Caco-2 (cell line): ENCODE measurements at regions of chr3 and their contacts with region 1.

Region 1: DNA sequence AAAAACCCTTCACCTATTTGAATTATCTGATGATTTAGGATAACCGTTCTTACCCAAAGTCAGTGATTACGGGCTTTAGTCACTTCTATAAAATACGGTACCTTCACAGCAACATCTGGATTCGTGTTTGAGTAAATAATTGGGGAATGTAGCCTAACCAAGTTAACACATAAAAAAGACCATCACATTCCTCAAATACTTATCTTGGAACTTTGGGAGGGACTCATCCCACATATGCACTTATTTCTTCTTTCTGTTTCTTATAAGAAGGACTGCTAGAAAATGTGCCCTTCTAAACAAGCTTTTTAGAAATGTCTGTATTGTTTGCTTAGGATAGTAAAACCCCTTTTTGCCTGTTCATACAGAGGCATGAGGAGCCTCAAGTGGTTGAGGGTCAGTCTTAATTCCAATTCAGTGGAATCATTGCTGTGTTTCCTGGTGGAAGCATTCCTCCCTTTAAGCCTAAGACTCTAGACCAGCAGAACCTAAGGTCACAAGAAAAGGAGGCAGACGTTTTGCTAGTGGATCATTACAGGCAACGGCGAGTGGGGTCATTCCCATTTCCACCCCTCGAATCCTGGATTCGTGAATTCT is 67.5 kb downstream of the TMEM44 start:
- DNase-seq: no peak
- H3K4me3 ChIP-seq: no peak overlapping the region
- H3K4me3 Mint-ChIP-seq: no peak overlapping the region
- H3K27ac Mint-ChIP-seq: no peak overlapping the region
- H3K4me1 ChIP-seq: peaks cover 44% of the 10 kb centered on the region
- H3K4me1 Mint-ChIP-seq: peaks cover 16% of the 10 kb centered on the region
- H3K27me3 ChIP-seq: no peaks in the 10 kb centered on the region
- H3K27me3 Mint-ChIP-seq: no peaks in the 10 kb centered on the region
- CTCF ChIP-seq: no peak

Region 2: GRCh38 chr3:194536871-194537637 is 28.6 kb before region 1 on chr3:
- CTCF ChIA-PET with region 1: no interaction called
- POLR2A ChIA-PET with region 1: no interaction called
- intact Hi-C with region 1: loop called (anchors 1 kb)
- DNase-seq: peak; percentile 83 to 85
- H3K4me3 ChIP-seq: no peak overlapping the region
- H3K4me3 Mint-ChIP-seq: peak overlapping the region; percentile 50
- H3K27ac Mint-ChIP-seq: peak overlapping the region; percentile 89
- H3K4me1 ChIP-seq: peaks cover 41% of the 10 kb centered on the region
- H3K4me1 Mint-ChIP-seq: peaks cover 26% of the 10 kb centered on the region
- H3K27me3 ChIP-seq: no peaks in the 10 kb centered on the region
- H3K27me3 Mint-ChIP-seq: no peaks in the 10 kb centered on the region
- CTCF ChIP-seq: no peak